ENCODE measurements at regions of chr7 and their contacts with region 1.

Region 1: DNA sequence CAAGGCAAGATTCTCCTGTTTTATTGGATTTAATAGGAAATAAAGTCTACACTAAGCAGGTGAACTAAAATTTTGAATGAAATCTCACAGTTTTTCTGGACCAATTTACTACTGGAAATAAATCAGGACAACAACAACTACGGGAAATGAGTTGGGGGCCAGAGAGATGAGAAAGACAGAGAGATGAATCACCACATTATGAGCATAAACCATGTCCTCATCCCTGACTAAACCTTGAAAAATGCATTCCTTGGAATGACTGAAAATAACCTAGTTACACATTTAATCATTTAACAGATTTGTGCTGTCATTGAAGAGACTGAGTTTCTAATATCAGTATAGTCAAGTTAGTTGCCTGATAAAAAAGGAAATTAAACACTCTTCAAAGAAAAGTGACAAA is 608.4 kb upstream of the KCND2 start:
- DNase-seq: peak; percentile 79
- H3K4me3 ChIP-seq: no peak overlapping the region
- H3K27ac ChIP-seq: peak overlapping the region; percentile 77
- H3K4me1 ChIP-seq: peaks cover 10% of the 10 kb centered on the region
- H3K27me3 ChIP-seq: no peaks in the 10 kb centered on the region
- CTCF ChIP-seq: no peak
- POLR2A ChIP-seq: no peak

Region 2: GRCh38 chr7:119436882-119437281 is 227.7 kb before region 1 on chr7:
- CTCF ChIA-PET with region 1: no interaction called
- POLR2A ChIA-PET with region 1: no interaction called
- dilution Hi-C with region 1: no loop called
- intact Hi-C with region 1: no loop called
- DNase-seq: no peak
- H3K4me3 ChIP-seq: no peak overlapping the region
- H3K27ac ChIP-seq: no peak overlapping the region
- H3K4me1 ChIP-seq: no peaks in the 10 kb centered on the region
- H3K27me3 ChIP-seq: no peaks in the 10 kb centered on the region
- CTCF ChIP-seq: no peak
- POLR2A ChIP-seq: no peak

Region 3: DNA sequence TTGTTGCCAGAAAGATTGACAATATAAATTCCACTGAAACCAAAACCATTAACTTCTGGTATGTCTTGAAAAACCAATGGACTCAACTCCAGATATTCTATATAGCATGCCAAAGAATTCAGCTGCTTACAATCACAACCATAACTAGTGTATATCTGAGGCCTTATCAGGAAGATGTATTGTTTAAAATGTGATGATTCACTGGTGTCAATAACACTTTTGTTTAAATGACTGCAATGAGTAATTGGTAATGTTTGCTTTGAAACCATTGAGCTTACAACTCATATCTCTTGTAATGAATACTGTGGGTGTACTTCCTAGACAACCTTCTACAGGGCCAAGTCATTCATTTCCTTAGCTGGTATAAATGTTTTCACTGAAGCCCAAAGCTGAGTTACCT is 119.5 kb before region 1 on chr7:
- CTCF ChIA-PET with region 1: no interaction called
- POLR2A ChIA-PET with region 1: no interaction called
- dilution Hi-C with region 1: no loop called
- intact Hi-C with region 1: loop called (anchors 1 kb)
- DNase-seq: peak; percentile 81
- H3K4me3 ChIP-seq: no peak overlapping the region
- H3K27ac ChIP-seq: peak overlapping the region; percentile 65
- H3K4me1 ChIP-seq: peaks cover 15% of the 10 kb centered on the region
- H3K27me3 ChIP-seq: no peaks in the 10 kb centered on the region
- CTCF ChIP-seq: no peak
- POLR2A ChIP-seq: no peak

Region 4: GRCh38 chr7:119606297-119606696 is 58.3 kb before region 1 on chr7:
- CTCF ChIA-PET with region 1: no interaction called
- POLR2A ChIA-PET with region 1: no interaction called
- dilution Hi-C with region 1: no loop called
- intact Hi-C with region 1: no loop called
- DNase-seq: no peak
- H3K4me3 ChIP-seq: no peak overlapping the region
- H3K27ac ChIP-seq: no peak overlapping the region
- H3K4me1 ChIP-seq: no peaks in the 10 kb centered on the region
- H3K27me3 ChIP-seq: no peaks in the 10 kb centered on the region
- CTCF ChIP-seq: no peak
- POLR2A ChIP-seq: no peak

Region 5: GRCh38 chr7:119720541-119720940 is 55.9 kb after region 1 on chr7:
- CTCF ChIA-PET with region 1: no interaction called
- POLR2A ChIA-PET with region 1: no interaction called
- dilution Hi-C with region 1: no loop called
- intact Hi-C with region 1: loop called (anchors 1 kb)
- DNase-seq: peak; percentile 92
- H3K4me3 ChIP-seq: no peak overlapping the region
- H3K27ac ChIP-seq: peak overlapping the region; percentile 90
- H3K4me1 ChIP-seq: peaks cover 20% of the 10 kb centered on the region
- H3K27me3 ChIP-seq: no peaks in the 10 kb centered on the region
- CTCF ChIP-seq: no peak
- POLR2A ChIP-seq: no peak